ENCODE measurements at regions of chr2 and their contacts with region 1.

Region 1: DNA sequence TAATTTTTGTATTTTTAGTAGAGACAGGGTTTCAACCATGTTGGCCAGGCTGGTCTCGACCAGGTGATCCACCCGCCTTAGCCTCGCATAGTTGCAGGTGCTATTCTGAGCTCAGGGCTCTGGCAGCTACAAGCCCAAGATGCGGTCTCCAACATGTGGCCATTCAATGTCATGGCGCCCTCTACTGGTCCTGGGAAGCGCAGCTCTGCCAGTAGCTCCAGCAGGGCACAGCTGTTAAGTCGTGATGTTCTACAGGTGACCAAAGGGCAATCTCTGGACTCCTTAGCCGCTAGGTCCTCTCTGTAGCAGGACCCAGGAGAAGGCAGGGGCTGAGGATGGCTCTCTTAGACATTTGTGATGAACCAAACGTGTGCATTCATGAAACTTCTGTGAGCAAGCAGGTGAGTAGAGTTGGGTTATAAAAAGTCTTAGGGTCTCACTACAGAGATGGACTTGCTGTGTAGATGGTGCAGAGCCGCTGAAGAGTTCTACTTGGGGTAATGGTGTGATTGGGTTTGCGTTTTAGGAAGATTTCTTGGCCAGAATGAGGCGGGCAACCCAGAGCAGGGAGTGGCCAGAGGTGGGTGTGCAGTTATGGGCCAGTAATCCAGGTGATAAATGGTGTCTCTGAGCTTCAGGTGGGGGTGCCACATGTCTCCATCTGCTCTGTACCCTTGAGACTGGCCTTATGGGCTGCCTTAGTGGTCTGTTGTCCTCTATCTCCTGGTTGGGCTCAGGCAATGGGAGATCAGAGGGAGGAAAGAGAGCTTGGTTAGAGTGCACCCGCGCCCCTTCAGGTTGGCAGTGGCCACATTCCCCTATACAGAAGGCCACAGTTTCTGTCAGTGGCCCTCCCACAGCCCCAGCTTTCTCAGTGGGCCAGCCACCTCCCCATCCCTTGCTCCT is 31.0 kb downstream of the IL37 start:
- DNase-seq: peak; percentile 87
- ATAC-seq: peak; percentile 98
- H3K4me3 Mint-ChIP-seq: no peak overlapping the region
- H3K27ac Mint-ChIP-seq: no peak overlapping the region
- H3K4me1 Mint-ChIP-seq: no peaks in the 10 kb centered on the region
- H3K27me3 Mint-ChIP-seq: peaks cover 26% of the 10 kb centered on the region

Region 2: GRCh38 chr2:112749755-112750559 is 192.0 kb before region 1 on chr2:
- CTCF ChIA-PET with region 1: interaction called, 107 read pairs
- DNase-seq: peak; percentile 91
- ATAC-seq: peak; percentile 89
- H3K4me3 Mint-ChIP-seq: peak overlapping the region; percentile 1
- H3K27ac Mint-ChIP-seq: peak overlapping the region; percentile 80
- H3K4me1 Mint-ChIP-seq: peaks cover 48% of the 10 kb centered on the region
- H3K27me3 Mint-ChIP-seq: no peaks in the 10 kb centered on the region

Region 3: GRCh38 chr2:112884869-112885505 is 57.0 kb before region 1 on chr2:
- CTCF ChIA-PET with region 1: interaction called, 37 read pairs
- DNase-seq: peak; percentile 84
- ATAC-seq: peak; percentile 76
- H3K4me3 Mint-ChIP-seq: peak overlapping the region; percentile 17
- H3K27ac Mint-ChIP-seq: peak overlapping the region; percentile 48
- H3K4me1 Mint-ChIP-seq: peaks cover 35% of the 10 kb centered on the region
- H3K27me3 Mint-ChIP-seq: no peaks in the 10 kb centered on the region

Region 4: DNA sequence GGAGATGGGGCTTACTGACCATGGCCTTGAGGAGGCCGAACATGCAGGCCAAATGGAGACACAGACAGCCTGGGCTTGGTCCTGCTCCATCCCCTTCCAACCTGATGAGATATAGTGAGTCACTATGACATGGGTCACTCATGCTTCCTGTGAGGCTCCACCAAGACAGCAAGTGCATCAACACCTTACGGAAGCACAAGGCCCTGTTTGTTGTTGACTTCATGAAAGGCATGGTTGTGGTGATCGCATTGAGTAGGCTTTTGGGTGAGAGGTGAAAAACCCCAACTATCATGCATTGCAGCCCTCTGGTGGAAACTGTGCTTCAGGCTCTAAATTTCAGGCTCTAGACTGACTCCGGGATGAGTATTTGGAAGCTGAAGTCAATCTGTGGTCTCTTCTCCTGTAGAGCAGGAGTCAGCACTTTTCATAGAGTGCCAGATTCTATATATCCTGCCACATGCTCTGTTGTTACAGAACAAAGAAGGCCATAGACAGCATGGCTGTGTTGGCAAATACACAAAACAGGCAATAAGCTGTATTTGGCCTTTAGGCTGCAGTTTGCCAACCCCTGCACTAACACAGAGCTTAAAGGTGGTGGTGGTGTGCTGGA is 21.0 kb before region 1 on chr2:
- CTCF ChIA-PET with region 1: interaction called, 42 read pairs
- DNase-seq: peak; percentile 80
- ATAC-seq: peak; percentile 82
- H3K4me3 Mint-ChIP-seq: no peak overlapping the region
- H3K27ac Mint-ChIP-seq: peak overlapping the region; percentile 81
- H3K4me1 Mint-ChIP-seq: peaks cover 30% of the 10 kb centered on the region
- H3K27me3 Mint-ChIP-seq: peaks cover 1% of the 10 kb centered on the region

Region 5: DNA sequence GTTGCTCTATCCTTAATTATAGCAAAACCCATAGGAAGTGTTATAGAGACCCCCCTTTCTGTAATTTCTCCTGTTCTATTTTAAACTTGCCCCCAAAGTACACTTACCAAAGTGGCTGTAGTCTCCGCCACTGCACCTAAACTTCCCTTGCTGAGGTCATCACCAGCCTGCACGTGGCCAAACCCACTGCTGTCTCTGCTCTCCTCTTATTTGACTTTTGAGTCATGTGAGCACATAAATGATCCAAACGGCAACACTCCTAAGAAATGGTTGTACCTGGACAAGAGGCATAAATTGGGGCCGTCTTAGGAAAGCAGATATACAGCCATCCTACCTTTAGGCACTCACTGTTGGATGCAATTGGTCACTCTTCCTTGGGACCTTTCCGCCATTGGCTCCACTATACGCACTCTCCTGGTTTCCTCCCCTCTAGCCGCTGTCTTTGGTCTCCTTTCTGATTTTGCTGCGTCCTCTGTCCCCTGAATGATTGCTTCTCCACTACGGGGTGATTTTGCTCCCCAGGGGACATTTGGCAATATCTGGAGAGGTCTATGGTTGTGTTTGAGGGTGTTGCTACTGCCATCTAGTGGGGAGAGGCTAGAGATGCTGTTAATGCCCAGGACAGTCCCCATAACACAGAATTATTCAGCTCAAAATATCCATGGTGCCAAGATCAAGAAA is 16.6 kb after region 1 on chr2:
- CTCF ChIA-PET with region 1: interaction called, 29 read pairs
- DNase-seq: peak; percentile 58
- ATAC-seq: peak; percentile 77
- H3K4me3 Mint-ChIP-seq: no peak overlapping the region
- H3K27ac Mint-ChIP-seq: no peak overlapping the region
- H3K4me1 Mint-ChIP-seq: no peaks in the 10 kb centered on the region
- H3K27me3 Mint-ChIP-seq: peaks cover 12% of the 10 kb centered on the region